Ascending aorta (tissue), 2 donors: ENCODE measurements at regions of chr4 and their contacts with region 1.

Region 1: GRCh38 chr4:94757192-94758139 is at the start of gene BMPR1B:
- DNase-seq: peak in 1 of 2 donors; percentile 74
- H3K4me3 ChIP-seq: peak within 1 kb of the TSS; percentile 76 to 81
- H3K27ac ChIP-seq: peak within 1 kb of the TSS; percentile 79 to 85
- H3K4me1 ChIP-seq: no peaks in the 10 kb centered on the region
- H3K27me3 ChIP-seq: no peaks in the 10 kb centered on the region
- CTCF ChIP-seq: peak in 1 of 3 experiments; percentile 12
- total RNA-seq, gene BMPR1B: 3.8 TPM

Region 2: DNA sequence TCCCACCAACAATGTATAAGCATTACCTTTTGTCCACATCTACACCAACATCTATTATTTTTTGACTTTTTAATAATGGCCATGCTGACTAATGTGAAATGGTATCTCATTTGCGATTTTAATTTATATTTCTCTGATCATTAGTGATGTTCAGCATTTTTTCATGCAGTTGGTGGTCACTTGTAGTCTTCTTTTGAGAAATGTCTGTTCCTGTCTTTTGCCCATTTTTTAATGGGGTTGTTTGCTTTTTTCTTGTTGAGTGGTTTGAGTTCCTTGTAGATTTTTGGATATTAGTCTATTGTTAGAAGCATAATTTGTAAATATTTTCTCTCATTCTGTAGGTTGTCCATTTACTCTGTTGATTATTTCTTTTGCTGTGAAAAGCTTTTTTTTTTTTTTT is 342.6 kb before region 1 on chr4:
- intact Hi-C with region 1: no loop called
- DNase-seq: no peak
- H3K4me3 ChIP-seq: no peak overlapping the region
- H3K27ac ChIP-seq: peak overlapping the region; percentile 80 to 82
- H3K4me1 ChIP-seq: peaks cover 3 to 36% of the 10 kb centered on the region in 2 donors
- H3K27me3 ChIP-seq: no peaks in the 10 kb centered on the region
- CTCF ChIP-seq: no peak

Region 3: GRCh38 chr4:94451695-94452475 is 305.6 kb before region 1 on chr4 and contains the start of gene PDLIM5:
- intact Hi-C with region 1: loop called (anchors 5 kb)
- DNase-seq: peak; percentile 74 to 95
- H3K4me3 ChIP-seq: peak within 1 kb of the TSS; percentile 94 to 100
- H3K27ac ChIP-seq: peak within 1 kb of the TSS; percentile 100
- H3K4me1 ChIP-seq: peaks cover under 1 to 22% of the 10 kb centered on the region in 2 donors
- H3K27me3 ChIP-seq: no peaks in the 10 kb centered on the region
- CTCF ChIP-seq: no peak
- total RNA-seq, gene PDLIM5: 103 TPM

Region 4: DNA sequence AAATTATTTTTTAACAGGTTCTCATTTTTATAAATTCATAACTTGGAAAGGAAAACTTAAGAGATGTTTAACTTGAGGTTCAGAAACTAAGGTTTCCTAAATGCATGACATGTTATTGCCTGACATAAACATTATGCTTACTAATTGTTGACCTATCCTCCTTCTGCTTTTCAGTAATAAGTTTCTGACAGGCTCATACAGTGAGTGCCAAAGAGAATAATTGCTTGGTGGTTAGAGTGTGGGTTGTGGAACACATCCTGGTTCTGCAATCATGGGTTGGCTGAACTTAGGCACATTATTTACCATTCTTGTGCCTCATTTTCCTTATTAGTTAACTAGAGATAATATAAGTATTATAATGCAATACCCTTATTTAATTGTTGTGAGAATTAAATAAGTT is 56.8 kb after region 1 on chr4:
- intact Hi-C with region 1: no loop called
- DNase-seq: no peak
- H3K4me3 ChIP-seq: no peak overlapping the region
- H3K27ac ChIP-seq: no peak overlapping the region
- H3K4me1 ChIP-seq: peaks cover 0 to 2% of the 10 kb centered on the region in 2 donors
- H3K27me3 ChIP-seq: no peaks in the 10 kb centered on the region
- CTCF ChIP-seq: no peak

Region 5: GRCh38 chr4:94827481-94828110 is 70.1 kb after region 1 on chr4:
- intact Hi-C with region 1: loop called (anchors 5 kb)
- DNase-seq: no peak
- H3K4me3 ChIP-seq: no peak overlapping the region
- H3K27ac ChIP-seq: no peak overlapping the region
- H3K4me1 ChIP-seq: peaks cover 0 to 6% of the 10 kb centered on the region in 2 donors
- H3K27me3 ChIP-seq: no peaks in the 10 kb centered on the region
- CTCF ChIP-seq: no peak

Region 6: GRCh38 chr4:94995684-94996394 is 238.4 kb after region 1 on chr4:
- intact Hi-C with region 1: loop called (anchors 10 kb)
- DNase-seq: peak; percentile 10 to 77
- H3K4me3 ChIP-seq: peak overlapping the region; percentile 15 to 52
- H3K27ac ChIP-seq: peak overlapping the region; percentile 57 to 67
- H3K4me1 ChIP-seq: peaks cover 0 to 13% of the 10 kb centered on the region in 2 donors
- H3K27me3 ChIP-seq: no peaks in the 10 kb centered on the region
- CTCF ChIP-seq: no peak

Region 7: GRCh38 chr4:95549246-95550114 is 792.0 kb after region 1 on chr4:
- intact Hi-C with region 1: loop called (anchors 10 kb)
- DNase-seq: peak in 1 of 2 donors; percentile 80
- H3K4me3 ChIP-seq: peak overlapping the region; percentile 74 to 98
- H3K27ac ChIP-seq: peak overlapping the region; percentile 93 to 96
- H3K4me1 ChIP-seq: no peaks in the 10 kb centered on the region
- H3K27me3 ChIP-seq: no peaks in the 10 kb centered on the region
- CTCF ChIP-seq: no peak